ENCODE measurements at regions of chr20 and their contacts with region 1.

Region 1: DNA sequence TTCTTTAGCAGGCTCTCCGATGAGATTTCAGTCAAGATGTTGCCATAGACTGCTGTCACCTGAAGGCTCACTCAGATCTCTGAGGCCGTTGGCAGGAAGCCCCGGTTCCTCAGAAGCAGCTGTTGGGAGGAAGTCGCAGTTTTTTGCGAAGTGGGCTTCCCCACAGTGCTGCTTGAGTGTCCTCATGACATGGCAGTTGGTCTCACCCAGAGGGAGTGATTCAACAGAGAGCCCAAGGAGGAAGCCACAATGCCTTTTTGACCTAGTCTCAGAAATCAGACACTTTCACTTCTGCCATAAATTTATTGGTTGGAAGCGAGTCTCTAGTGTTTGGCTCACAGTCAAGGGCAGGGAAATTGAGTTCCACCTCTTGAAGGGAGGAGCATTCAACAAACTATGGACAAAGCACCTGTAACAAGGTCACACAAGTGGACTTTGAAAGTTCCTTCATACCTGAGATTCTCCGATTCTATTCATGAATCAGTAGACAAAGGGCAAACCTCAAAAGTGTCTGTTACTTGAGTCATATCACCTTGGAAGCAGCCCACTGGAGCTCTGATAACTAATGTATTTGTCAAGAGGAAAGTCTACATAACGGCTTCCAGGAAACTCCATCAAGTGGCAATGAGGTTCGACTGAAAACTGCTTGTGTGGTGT is 208.3 kb downstream of the TASP1 start:
- DNase-seq: peak; percentile 6
- H3K4me3 Mint-ChIP-seq: peak overlapping the region; percentile 1
- H3K27ac Mint-ChIP-seq: peak overlapping the region; percentile 16
- H3K4me1 Mint-ChIP-seq: peaks cover 25% of the 10 kb centered on the region
- H3K27me3 Mint-ChIP-seq: no peaks in the 10 kb centered on the region

Region 2: DNA sequence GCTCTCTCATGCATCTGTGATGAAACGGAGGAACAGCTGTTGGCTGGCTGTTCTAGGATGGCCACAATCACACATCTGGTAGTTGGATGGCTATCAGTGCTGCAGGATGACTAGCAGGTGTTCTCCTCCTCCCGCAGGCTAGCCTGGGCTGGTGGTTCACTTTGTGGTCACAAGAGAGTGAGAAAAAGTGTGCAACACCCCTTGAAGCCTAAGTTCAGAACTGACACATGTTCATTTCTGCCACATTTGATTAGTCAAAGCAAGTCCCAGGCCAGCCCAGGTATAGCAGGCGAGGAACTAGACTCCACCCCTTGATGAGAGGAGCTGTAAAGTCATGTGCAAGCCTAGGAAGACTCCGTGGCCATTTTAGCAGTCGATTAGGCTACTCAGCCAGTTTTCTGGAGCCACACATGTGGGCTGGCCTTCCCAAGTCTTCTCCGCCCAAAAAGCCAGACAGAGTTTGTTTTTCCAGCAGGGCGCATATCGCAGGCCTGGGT is 88.6 kb before region 1 on chr20:
- intact Hi-C with region 1: loop called (anchors 2 kb)
- DNase-seq: no peak
- H3K4me3 Mint-ChIP-seq: no peak overlapping the region
- H3K27ac Mint-ChIP-seq: no peak overlapping the region
- H3K4me1 Mint-ChIP-seq: peaks cover 20% of the 10 kb centered on the region
- H3K27me3 Mint-ChIP-seq: no peaks in the 10 kb centered on the region

Region 3: GRCh38 chr20:13458860-13459451 is 28.5 kb after region 1 on chr20:
- intact Hi-C with region 1: no loop called
- DNase-seq: no peak
- H3K4me3 Mint-ChIP-seq: no peak overlapping the region
- H3K27ac Mint-ChIP-seq: no peak overlapping the region
- H3K4me1 Mint-ChIP-seq: no peaks in the 10 kb centered on the region
- H3K27me3 Mint-ChIP-seq: no peaks in the 10 kb centered on the region

Measured in activated T-helper 1 cell treated with anti-CD3 and anti-CD28 coated beads, Interleukin-12 subunit alpha, Interleukin-12 subunit beta, Interleukin-2, Interleukin-4 antibody, amounts not matched to agents 30 ng/mL and 10 ng/mL and 1 ng/mL, durations not matched to agents 14 hours and 24 hours and 36 hours (primary cell).